CD8-positive, alpha-beta T cell (primary cell): ENCODE measurements at regions of chr11 and their contacts with region 1.

Region 1: DNA sequence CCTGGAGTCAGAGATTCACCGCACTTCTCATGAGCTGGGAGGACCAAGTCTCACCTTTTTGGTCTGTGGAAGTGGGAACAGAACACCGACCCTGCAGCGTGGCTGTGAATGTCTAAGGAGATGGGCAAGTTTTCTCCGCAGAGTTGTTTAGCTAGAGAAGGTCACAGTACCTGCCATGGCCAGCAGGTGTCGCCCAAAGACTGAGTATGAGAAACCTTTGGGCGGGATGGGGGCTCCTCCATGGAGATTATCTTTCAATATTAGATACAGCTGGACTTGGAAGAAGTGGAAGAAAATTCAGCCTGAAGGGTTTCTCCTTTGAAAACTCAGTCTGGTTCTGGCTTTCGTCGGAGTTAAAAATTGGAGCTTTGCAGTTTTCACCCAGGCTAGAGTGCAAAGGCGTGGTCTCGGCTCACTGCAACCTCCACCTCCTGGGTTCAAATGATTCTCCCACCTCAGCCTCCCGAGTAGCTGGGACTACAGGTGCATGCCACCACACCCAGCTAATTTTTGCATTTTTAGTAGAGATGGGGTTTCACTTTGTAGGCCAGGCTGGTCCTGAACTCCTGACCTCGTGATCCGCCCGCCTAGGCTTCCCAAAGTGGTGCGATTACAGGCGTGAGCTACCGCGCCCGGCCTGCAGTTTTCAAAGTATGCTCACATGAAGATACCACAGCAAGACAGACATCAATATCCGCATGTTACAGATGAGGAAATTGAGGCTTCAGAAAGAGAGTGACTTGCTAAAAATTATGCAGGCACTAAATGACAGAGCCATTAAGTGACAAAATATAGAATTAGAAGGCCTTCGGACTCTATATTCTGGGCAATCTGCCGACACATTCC is 10.7 kb upstream of the DSCAML1 start:
- DNase-seq: peak; percentile 58 to 85 (median 78)
- ATAC-seq: peak; percentile 89
- H3K4me3 ChIP-seq: no peak overlapping the region
- H3K4me3 Mint-ChIP-seq: no peak overlapping the region
- H3K27ac ChIP-seq: no peak overlapping the region
- H3K27ac Mint-ChIP-seq: no peak overlapping the region
- H3K4me1 ChIP-seq: peaks cover 4% of the 10 kb centered on the region
- H3K4me1 Mint-ChIP-seq: peaks cover 7% of the 10 kb centered on the region
- H3K27me3 ChIP-seq: no peaks in the 10 kb centered on the region
- H3K27me3 Mint-ChIP-seq: no peaks in the 10 kb centered on the region
- CTCF ChIP-seq: peak; percentile 94

Region 2: GRCh38 chr11:117717485-117718314 is 90.0 kb before region 1 on chr11:
- CTCF ChIA-PET with region 1: no interaction called
- POLR2A ChIA-PET with region 1: no interaction called
- intact Hi-C with region 1: no loop called
- DNase-seq: no peak
- ATAC-seq: no peak
- H3K4me3 ChIP-seq: no peak overlapping the region
- H3K4me3 Mint-ChIP-seq: no peak overlapping the region
- H3K27ac ChIP-seq: no peak overlapping the region
- H3K27ac Mint-ChIP-seq: no peak overlapping the region
- H3K4me1 ChIP-seq: no peaks in the 10 kb centered on the region
- H3K4me1 Mint-ChIP-seq: no peaks in the 10 kb centered on the region
- H3K27me3 ChIP-seq: no peaks in the 10 kb centered on the region
- H3K27me3 Mint-ChIP-seq: peaks cover 12% of the 10 kb centered on the region
- CTCF ChIP-seq: no peak

Region 3: DNA sequence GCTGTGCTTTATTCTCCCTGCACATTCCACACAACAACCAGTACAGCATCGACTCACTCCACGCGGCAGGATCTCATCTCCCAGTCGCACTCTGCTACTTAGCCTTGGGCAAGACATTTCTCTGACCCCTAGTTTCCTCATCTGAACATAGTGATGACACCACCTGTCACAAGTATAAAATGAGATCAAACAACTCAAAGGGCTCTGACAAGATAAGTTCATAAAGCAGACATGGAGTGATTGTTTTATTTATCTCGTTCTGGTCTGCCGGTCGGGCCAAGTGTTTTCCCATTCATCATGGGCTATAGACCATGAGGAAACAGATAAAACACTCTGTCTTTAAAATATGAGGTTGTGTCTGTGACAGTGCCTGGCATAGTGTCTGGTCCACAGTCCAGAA is 45.7 kb before region 1 on chr11:
- CTCF ChIA-PET with region 1: no interaction called
- POLR2A ChIA-PET with region 1: no interaction called
- intact Hi-C with region 1: no loop called
- DNase-seq: no peak
- ATAC-seq: no peak
- H3K4me3 ChIP-seq: no peak overlapping the region
- H3K4me3 Mint-ChIP-seq: no peak overlapping the region
- H3K27ac ChIP-seq: no peak overlapping the region
- H3K27ac Mint-ChIP-seq: no peak overlapping the region
- H3K4me1 ChIP-seq: no peaks in the 10 kb centered on the region
- H3K4me1 Mint-ChIP-seq: no peaks in the 10 kb centered on the region
- H3K27me3 ChIP-seq: no peaks in the 10 kb centered on the region
- H3K27me3 Mint-ChIP-seq: no peaks in the 10 kb centered on the region
- CTCF ChIP-seq: no peak

Region 4: DNA sequence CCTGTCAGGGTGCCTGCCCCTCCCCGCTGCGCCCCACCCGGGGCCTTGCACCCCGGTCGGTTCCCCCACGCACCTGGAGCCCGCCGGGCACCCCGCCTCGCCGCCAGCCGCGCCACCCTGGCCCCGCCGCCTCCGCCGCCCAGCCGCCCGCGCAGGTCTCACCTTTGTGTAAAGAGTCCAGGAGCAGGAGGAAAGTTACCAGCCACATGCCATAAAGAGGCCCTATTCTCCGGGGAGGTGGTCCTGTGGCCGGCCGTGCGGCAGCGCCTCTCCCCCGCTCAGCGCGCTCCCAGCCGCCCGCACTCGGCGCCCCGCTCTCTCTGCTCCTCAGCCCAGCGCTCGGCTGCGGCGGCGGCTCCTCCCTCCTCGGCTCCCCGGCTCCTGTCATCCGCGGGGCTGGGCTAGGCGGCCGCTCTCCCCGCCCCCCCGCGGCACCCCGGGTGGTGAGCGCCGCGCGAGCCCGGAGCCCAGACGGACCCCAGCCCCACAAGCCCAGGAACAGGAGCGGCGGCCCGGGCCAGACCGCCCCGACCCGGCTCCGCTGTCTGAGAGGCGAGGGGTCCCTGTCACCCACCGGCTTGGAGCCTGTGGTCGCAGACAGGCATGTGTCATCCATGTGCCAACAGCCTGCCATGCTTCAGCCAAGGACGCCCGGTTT is 10.7 kb before region 1 on chr11 and contains the start of gene DSCAML1:
- CTCF ChIA-PET with region 1: interaction called, 27 read pairs
- POLR2A ChIA-PET with region 1: interaction called, 3 read pairs
- intact Hi-C with region 1: no loop called
- DNase-seq: peak in 5 of 9 experiments; percentile 11 to 59 (median 47)
- ATAC-seq: peak; percentile 86
- H3K4me3 ChIP-seq: peak within 1 kb of the TSS; percentile 28 to 39
- H3K4me3 Mint-ChIP-seq: peak within 1 kb of the TSS; percentile 73
- H3K27ac ChIP-seq: no peak within 1 kb of the TSS
- H3K27ac Mint-ChIP-seq: no peak within 1 kb of the TSS
- H3K4me1 ChIP-seq: peaks cover 20% of the 10 kb centered on the region
- H3K4me1 Mint-ChIP-seq: peaks cover 18% of the 10 kb centered on the region
- H3K27me3 ChIP-seq: peaks cover 26 to 43% of the 10 kb centered on the region in 2 experiments
- H3K27me3 Mint-ChIP-seq: peaks cover 40% of the 10 kb centered on the region
- CTCF ChIP-seq: no peak
- total RNA-seq, gene DSCAML1: 1.3 to 1.8 TPM

Region 5: GRCh38 chr11:117828611-117829368 is 21.1 kb after region 1 on chr11:
- CTCF ChIA-PET with region 1: interaction called, 431 read pairs
- POLR2A ChIA-PET with region 1: no interaction called
- intact Hi-C with region 1: no loop called
- DNase-seq: peak; percentile 58 to 94 (median 89)
- ATAC-seq: peak; percentile 87
- H3K4me3 ChIP-seq: no peak overlapping the region
- H3K4me3 Mint-ChIP-seq: peak overlapping the region; percentile 53
- H3K27ac ChIP-seq: peak overlapping the region in 1 of 2 experiments; percentile 69
- H3K27ac Mint-ChIP-seq: peak overlapping the region; percentile 91
- H3K4me1 ChIP-seq: peaks cover 52% of the 10 kb centered on the region
- H3K4me1 Mint-ChIP-seq: peaks cover 69% of the 10 kb centered on the region
- H3K27me3 ChIP-seq: no peaks in the 10 kb centered on the region
- H3K27me3 Mint-ChIP-seq: no peaks in the 10 kb centered on the region
- CTCF ChIP-seq: no peak

Region 6: DNA sequence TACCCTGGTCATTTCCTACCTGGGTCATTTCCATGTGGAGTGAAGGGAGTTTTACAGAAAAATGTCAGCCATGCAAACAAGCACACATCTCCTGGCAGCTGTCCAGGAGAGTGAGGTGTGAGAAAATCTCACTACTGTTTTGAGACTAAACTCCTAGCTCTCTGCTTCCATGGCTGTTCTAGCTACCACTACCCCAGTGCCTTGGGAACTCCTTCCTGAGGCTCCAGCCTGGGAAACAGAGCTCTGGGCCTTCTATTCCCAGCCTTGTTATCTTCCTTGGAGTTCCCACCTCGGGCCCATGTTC is 124.3 kb after region 1 on chr11:
- CTCF ChIA-PET with region 1: interaction called, 16 read pairs
- POLR2A ChIA-PET with region 1: no interaction called
- intact Hi-C with region 1: no loop called
- DNase-seq: peak in 6 of 9 experiments; percentile 32 to 73 (median 56)
- ATAC-seq: no peak
- H3K4me3 ChIP-seq: no peak overlapping the region
- H3K4me3 Mint-ChIP-seq: no peak overlapping the region
- H3K27ac ChIP-seq: peak overlapping the region in 1 of 2 experiments; percentile 65
- H3K27ac Mint-ChIP-seq: peak overlapping the region; percentile 91
- H3K4me1 ChIP-seq: peaks cover 52% of the 10 kb centered on the region
- H3K4me1 Mint-ChIP-seq: peaks cover 56% of the 10 kb centered on the region
- H3K27me3 ChIP-seq: no peaks in the 10 kb centered on the region
- H3K27me3 Mint-ChIP-seq: no peaks in the 10 kb centered on the region
- CTCF ChIP-seq: no peak

Region 7: DNA sequence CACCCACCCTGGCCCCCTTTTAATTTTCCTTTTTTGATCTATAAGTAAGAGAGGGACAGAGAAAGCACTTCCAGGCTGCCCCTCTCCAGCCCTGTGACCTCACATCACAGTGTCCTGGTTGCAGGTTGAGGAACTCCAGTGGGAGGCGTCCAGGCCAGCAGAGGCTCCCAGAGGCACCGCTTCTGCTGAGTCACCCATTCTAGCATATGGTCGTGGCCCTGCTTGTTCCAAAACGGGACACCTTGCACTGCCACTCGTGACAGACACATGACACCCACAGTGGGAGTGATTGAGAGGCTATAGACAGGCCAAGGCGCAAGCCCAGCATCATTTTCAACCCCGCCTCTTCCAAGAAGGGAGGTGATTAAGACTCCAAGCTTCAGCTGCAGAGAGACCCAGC is 253.2 kb after region 1 on chr11:
- CTCF ChIA-PET with region 1: interaction called, 149 read pairs
- POLR2A ChIA-PET with region 1: no interaction called
- intact Hi-C with region 1: no loop called
- DNase-seq: no peak
- ATAC-seq: no peak
- H3K4me3 ChIP-seq: no peak overlapping the region
- H3K4me3 Mint-ChIP-seq: no peak overlapping the region
- H3K27ac ChIP-seq: no peak overlapping the region
- H3K27ac Mint-ChIP-seq: no peak overlapping the region
- H3K4me1 ChIP-seq: no peaks in the 10 kb centered on the region
- H3K4me1 Mint-ChIP-seq: no peaks in the 10 kb centered on the region
- H3K27me3 ChIP-seq: no peaks in the 10 kb centered on the region
- H3K27me3 Mint-ChIP-seq: no peaks in the 10 kb centered on the region
- CTCF ChIP-seq: no peak